Ovary (tissue), 10 donors: ENCODE measurements at regions of chr1 and their contacts with region 1.

Region 1: GRCh38 chr1:76381450-76382097 is 307.0 kb downstream of the ST6GALNAC3 start:
- DNase-seq: peak in 1 of 5 donors; percentile 25
- H3K4me3 ChIP-seq: no peak overlapping the region
- H3K27ac ChIP-seq: no peak overlapping the region
- H3K4me1 ChIP-seq: no peaks in the 10 kb centered on the region
- H3K27me3 ChIP-seq: no peaks in the 10 kb centered on the region
- CTCF ChIP-seq: no peak
- EP300 ChIP-seq: no peak
- POLR2A ChIP-seq: no peak

Region 2: DNA sequence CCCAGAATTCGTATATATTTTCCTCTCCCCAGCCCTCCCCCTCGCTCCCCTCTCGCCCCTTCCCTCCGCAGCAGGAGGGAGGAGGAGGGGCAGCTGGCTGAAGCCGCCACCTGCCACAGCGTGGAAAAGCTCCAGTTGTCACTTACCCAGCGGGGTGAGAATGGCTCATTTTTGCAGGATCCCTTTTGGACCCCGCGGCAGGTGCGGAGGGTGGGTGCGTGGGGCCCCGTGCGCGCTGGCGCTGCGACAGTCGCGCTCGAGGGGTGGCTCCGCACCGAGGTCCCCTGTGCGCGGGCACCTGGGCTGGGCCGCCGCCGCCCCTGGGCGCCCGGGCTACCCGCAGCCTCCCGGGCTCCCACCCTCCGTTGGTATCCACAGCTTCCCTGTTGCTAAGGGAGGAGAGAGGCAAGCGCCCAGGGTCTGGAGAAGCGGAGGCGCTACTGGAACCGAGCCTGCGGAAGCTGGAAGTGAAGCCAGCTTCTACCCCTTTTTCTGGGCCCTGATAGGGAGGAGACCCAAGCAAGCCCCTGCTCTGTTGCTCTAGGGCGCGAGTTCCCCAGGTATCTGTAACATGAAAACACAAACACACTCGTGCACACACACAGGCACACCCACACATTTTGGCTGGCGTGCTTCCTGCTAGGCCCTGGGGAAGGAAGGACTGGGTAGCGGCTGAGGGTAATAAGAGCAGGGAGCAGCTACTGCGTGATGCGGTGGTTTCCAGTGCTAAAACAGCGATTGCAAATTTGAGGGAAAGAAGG is 1708.0 kb before region 1 on chr1 and contains the start of gene ERICH3:
- intact Hi-C with region 1: loop called in 1 of 4 experiments (anchors 5 kb)
- DNase-seq: peak in 3 of 5 donors; percentile 16 to 34 (median 23)
- H3K4me3 ChIP-seq: peak within 1 kb of the TSS; percentile 17
- H3K27ac ChIP-seq: no peak within 1 kb of the TSS
- H3K4me1 ChIP-seq: no peaks in the 10 kb centered on the region
- H3K27me3 ChIP-seq: no peaks in the 10 kb centered on the region
- CTCF ChIP-seq: no peak
- EP300 ChIP-seq: no peak
- POLR2A ChIP-seq: no peak
- total RNA-seq, gene ERICH3: 0.05 to 10.9 (median 1.1) TPM

Region 3: DNA sequence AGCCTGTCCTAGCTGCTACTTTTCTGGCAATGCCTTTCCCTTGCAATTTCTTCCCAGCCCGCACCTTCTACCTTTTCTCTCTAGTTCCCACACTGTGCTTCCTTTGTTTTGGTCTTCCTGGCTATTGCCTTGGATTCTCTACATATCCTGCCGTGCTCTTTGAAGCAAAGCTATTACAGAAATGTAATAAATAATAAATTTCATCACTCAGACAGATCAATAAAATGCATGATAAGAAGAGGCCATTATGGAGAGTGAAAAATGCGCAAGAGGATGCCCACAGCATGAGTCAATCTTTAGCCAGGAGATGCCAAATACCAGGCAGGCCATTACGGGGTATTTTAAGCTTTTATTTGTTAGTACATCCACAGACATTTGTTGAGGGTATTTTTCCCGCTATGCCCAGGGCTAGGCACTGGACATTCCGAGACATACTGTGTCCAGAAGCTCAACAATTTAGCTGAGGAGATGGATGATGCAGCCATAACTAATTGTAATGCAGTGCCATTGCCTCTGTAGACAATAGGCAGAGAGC is 143.4 kb before region 1 on chr1:
- intact Hi-C with region 1: no loop called
- DNase-seq: no peak
- H3K4me3 ChIP-seq: no peak overlapping the region
- H3K27ac ChIP-seq: no peak overlapping the region
- H3K4me1 ChIP-seq: no peaks in the 10 kb centered on the region
- H3K27me3 ChIP-seq: no peaks in the 10 kb centered on the region
- CTCF ChIP-seq: no peak
- EP300 ChIP-seq: no peak
- POLR2A ChIP-seq: no peak